AG04449 (cell line): ENCODE measurements at regions of chr4 and their contacts with region 1.

Region 1: GRCh38 chr4:159487284-159487747 is 384.4 kb downstream of the RAPGEF2 start:
- DNase-seq: peak; percentile 37
- H3K4me3 ChIP-seq: no peak overlapping the region
- CTCF ChIP-seq: peak; percentile 70

Region 2: GRCh38 chr4:159497936-159498335 is 10.6 kb after region 1 on chr4:
- CTCF ChIA-PET with region 1: interaction called, 19 read pairs
- POLR2A ChIA-PET with region 1: no interaction called
- DNase-seq: no peak
- H3K4me3 ChIP-seq: no peak overlapping the region
- CTCF ChIP-seq: no peak

Region 3: GRCh38 chr4:159549092-159549491 is 61.8 kb after region 1 on chr4:
- CTCF ChIA-PET with region 1: no interaction called
- POLR2A ChIA-PET with region 1: no interaction called
- DNase-seq: no peak
- H3K4me3 ChIP-seq: no peak overlapping the region
- CTCF ChIP-seq: no peak